CD4-positive, alpha-beta memory T cell (primary cell): ENCODE measurements at regions of chr4 and their contacts with region 1.

Region 1: GRCh38 chr4:28835501-28835900 is 1884.7 kb upstream of the PCDH7 start:
- DNase-seq: no peak
- H3K4me3 ChIP-seq: no peak overlapping the region
- H3K4me3 Mint-ChIP-seq: no peak overlapping the region
- H3K27ac ChIP-seq: no peak overlapping the region
- H3K27ac Mint-ChIP-seq: no peak overlapping the region
- H3K4me1 ChIP-seq: no peaks in the 10 kb centered on the region
- H3K4me1 Mint-ChIP-seq: no peaks in the 10 kb centered on the region
- H3K27me3 ChIP-seq: no peaks in the 10 kb centered on the region
- H3K27me3 Mint-ChIP-seq: no peaks in the 10 kb centered on the region

Region 2: DNA sequence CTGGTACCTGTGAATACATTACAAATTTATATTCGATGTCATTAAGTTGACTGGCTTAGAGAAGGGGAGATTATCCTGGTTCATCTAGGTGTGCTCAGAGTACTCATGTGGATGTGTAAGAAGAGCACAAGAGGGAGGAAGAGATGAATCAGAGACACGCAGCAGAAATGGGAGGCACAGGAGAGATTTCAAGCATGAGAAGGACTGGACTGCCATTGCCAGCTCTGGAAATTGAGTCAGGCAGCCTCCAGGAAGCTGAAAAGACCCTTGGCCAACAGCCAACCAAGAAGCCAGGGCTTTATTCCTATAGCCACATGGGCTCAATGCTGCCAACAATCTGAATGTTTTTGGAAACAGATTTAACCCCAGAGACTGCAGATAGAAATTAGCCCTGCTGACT is 584.9 kb before region 1 on chr4:
- CTCF ChIA-PET with region 1: no interaction called
- POLR2A ChIA-PET with region 1: no interaction called
- intact Hi-C with region 1: no loop called
- DNase-seq: no peak
- H3K4me3 ChIP-seq: no peak overlapping the region
- H3K4me3 Mint-ChIP-seq: no peak overlapping the region
- H3K27ac ChIP-seq: no peak overlapping the region
- H3K27ac Mint-ChIP-seq: no peak overlapping the region
- H3K4me1 ChIP-seq: no peaks in the 10 kb centered on the region
- H3K4me1 Mint-ChIP-seq: no peaks in the 10 kb centered on the region
- H3K27me3 ChIP-seq: no peaks in the 10 kb centered on the region
- H3K27me3 Mint-ChIP-seq: no peaks in the 10 kb centered on the region

Region 3: GRCh38 chr4:28772066-28772465 is 63.4 kb before region 1 on chr4:
- CTCF ChIA-PET with region 1: no interaction called
- POLR2A ChIA-PET with region 1: no interaction called
- intact Hi-C with region 1: loop called (anchors 10 kb)
- DNase-seq: no peak
- H3K4me3 ChIP-seq: no peak overlapping the region
- H3K4me3 Mint-ChIP-seq: no peak overlapping the region
- H3K27ac ChIP-seq: no peak overlapping the region
- H3K27ac Mint-ChIP-seq: no peak overlapping the region
- H3K4me1 ChIP-seq: no peaks in the 10 kb centered on the region
- H3K4me1 Mint-ChIP-seq: no peaks in the 10 kb centered on the region
- H3K27me3 ChIP-seq: no peaks in the 10 kb centered on the region
- H3K27me3 Mint-ChIP-seq: no peaks in the 10 kb centered on the region

Region 4: DNA sequence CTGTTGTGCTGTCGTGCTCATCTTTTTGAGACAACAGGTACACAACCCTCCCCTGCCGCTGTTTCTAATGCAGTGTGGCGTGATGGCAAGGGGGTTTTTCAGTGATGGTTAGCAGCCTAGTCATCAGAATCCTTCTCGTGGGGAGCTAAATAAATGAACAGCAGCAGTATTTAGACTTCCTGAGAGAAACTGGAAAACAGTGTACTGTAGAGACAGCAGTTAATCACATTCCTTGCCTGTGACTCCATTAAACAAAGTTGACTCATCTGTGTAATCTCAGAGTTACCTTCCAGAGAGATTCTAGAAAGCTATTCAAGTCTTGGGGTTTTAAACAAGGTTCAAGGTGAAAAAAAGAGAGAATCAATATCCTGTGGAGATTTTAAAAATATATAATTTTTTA is 131.5 kb after region 1 on chr4:
- CTCF ChIA-PET with region 1: no interaction called
- POLR2A ChIA-PET with region 1: no interaction called
- intact Hi-C with region 1: no loop called
- DNase-seq: no peak
- H3K4me3 ChIP-seq: no peak overlapping the region
- H3K4me3 Mint-ChIP-seq: no peak overlapping the region
- H3K27ac ChIP-seq: no peak overlapping the region
- H3K27ac Mint-ChIP-seq: no peak overlapping the region
- H3K4me1 ChIP-seq: no peaks in the 10 kb centered on the region
- H3K4me1 Mint-ChIP-seq: no peaks in the 10 kb centered on the region
- H3K27me3 ChIP-seq: no peaks in the 10 kb centered on the region
- H3K27me3 Mint-ChIP-seq: no peaks in the 10 kb centered on the region